Activated CD4-positive, alpha-beta T cell treated with anti-CD3 and anti-CD28 coated beads for 36 hours (primary cell): ENCODE measurements at regions of chr12 and their contacts with region 1.

Region 1: GRCh38 chr12:751192-751998 is 984 bp upstream of the WNK1 start:
- DNase-seq: peak; percentile 93
- ATAC-seq: peak; percentile 50
- H3K4me3 Mint-ChIP-seq: no peak overlapping the region
- H3K27ac Mint-ChIP-seq: no peak overlapping the region
- H3K4me1 Mint-ChIP-seq: peaks cover 17% of the 10 kb centered on the region
- H3K27me3 Mint-ChIP-seq: no peaks in the 10 kb centered on the region

Region 2: GRCh38 chr12:569803-570434 is 181.5 kb before region 1 on chr12:
- CTCF ChIA-PET with region 1: interaction called, 64 read pairs
- POLR2A ChIA-PET with region 1: interaction called, 8 read pairs
- intact Hi-C with region 1: loop called (anchors 1 to 2 kb)
- DNase-seq: peak; percentile 94
- ATAC-seq: peak; percentile 89
- H3K4me3 Mint-ChIP-seq: peak overlapping the region; percentile 74
- H3K27ac Mint-ChIP-seq: peak overlapping the region; percentile 85
- H3K4me1 Mint-ChIP-seq: peaks cover 65% of the 10 kb centered on the region
- H3K27me3 Mint-ChIP-seq: no peaks in the 10 kb centered on the region

Region 3: DNA sequence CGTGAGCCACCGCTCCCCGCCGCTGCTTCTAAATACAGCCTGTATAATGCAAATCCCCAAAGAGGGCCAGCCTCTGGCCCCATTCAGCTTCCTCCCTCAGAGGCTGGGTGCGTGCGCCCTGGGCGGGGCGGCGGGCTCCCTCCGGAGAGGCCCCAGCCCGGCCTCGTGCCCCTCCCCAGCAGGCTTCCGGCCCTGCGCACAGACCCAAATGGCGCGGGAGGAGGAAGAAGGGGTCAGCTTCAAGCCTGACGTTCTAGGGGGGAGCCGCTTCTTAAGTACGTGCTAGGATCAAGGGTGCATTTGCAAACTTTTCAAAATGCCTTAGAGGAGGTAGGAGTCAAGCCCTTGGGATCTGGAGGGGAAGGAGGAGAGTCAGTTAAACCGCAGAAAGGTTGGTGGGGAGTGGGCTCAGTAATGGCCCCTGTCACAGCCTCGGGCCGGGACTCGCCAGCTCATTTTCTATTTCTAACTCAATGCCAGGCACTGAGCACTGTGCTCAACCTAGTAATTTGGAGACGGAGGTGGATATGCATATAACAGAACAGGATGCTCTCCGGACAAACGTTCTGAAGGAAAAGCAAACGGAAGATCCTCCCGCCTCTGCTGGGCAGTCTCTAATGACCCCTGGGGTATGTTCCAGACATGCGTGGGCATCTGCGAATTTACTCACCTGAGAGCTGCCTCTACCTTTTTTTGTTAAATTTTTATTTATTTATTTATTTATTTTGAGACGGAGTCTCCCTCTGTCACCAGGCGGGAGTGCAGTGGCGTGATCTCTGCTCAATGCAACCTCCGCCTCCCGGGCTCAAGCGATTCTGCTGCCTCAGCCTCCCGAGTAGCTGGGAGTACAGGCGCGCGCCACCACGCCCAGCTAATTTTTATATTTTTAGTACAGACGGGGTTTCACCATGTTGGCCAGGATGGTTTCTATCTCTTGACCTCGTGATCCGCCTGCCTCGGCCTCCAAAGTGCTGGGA is 120.5 kb before region 1 on chr12:
- CTCF ChIA-PET with region 1: interaction called, 13 read pairs
- POLR2A ChIA-PET with region 1: interaction called, 6 read pairs
- intact Hi-C with region 1: loop called (anchors 1 kb)
- DNase-seq: peak; percentile 91
- ATAC-seq: peak; percentile 98
- H3K4me3 Mint-ChIP-seq: peak overlapping the region; percentile 88
- H3K27ac Mint-ChIP-seq: peak overlapping the region; percentile 100
- H3K4me1 Mint-ChIP-seq: peaks cover 47% of the 10 kb centered on the region
- H3K27me3 Mint-ChIP-seq: no peaks in the 10 kb centered on the region

Region 4: DNA sequence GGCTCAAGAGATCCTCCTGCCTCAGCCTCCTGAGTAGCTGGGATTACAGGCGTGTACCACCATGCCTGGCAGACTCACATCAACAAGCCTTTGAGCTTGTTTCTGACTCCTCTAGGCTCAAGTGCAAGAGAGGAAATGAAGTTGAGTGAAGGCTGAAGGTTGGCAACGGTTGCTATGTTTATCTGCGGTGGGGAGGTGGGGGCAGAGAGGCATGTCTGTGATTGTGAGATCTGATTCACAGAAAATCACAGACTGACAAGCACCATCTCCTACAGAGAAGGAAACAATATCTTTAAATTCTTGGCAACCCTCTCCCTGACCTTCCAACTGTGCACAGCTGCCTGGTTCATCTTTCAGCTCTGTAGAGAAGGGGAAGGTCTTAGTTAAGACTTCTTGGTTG is 66.0 kb before region 1 on chr12:
- CTCF ChIA-PET with region 1: interaction called, 8 read pairs
- POLR2A ChIA-PET with region 1: interaction called, 8 read pairs
- intact Hi-C with region 1: loop called in 1 of 2 experiments (anchors 1 kb)
- DNase-seq: peak; percentile 89
- ATAC-seq: peak; percentile 96
- H3K4me3 Mint-ChIP-seq: no peak overlapping the region
- H3K27ac Mint-ChIP-seq: peak overlapping the region; percentile 75
- H3K4me1 Mint-ChIP-seq: peaks cover 44% of the 10 kb centered on the region
- H3K27me3 Mint-ChIP-seq: no peaks in the 10 kb centered on the region

Region 5: GRCh38 chr12:779745-780734 is 28.6 kb after region 1 on chr12:
- CTCF ChIA-PET with region 1: interaction called, 14 read pairs
- POLR2A ChIA-PET with region 1: no interaction called
- intact Hi-C with region 1: loop called in 1 of 2 experiments (anchors 2 kb)
- DNase-seq: no peak
- ATAC-seq: peak; percentile 62
- H3K4me3 Mint-ChIP-seq: peak overlapping the region; percentile 64
- H3K27ac Mint-ChIP-seq: peak overlapping the region; percentile 75
- H3K4me1 Mint-ChIP-seq: peaks cover 70% of the 10 kb centered on the region
- H3K27me3 Mint-ChIP-seq: no peaks in the 10 kb centered on the region

Region 6: GRCh38 chr12:990661-991349 is 239.4 kb after region 1 on chr12 and contains the start of gene ERC1:
- CTCF ChIA-PET with region 1: no interaction called
- POLR2A ChIA-PET with region 1: no interaction called
- intact Hi-C with region 1: loop called in 1 of 2 experiments (anchors 2 kb)
- DNase-seq: peak; percentile 92
- ATAC-seq: peak; percentile 88
- H3K4me3 Mint-ChIP-seq: peak within 1 kb of the TSS; percentile 92
- H3K27ac Mint-ChIP-seq: peak within 1 kb of the TSS; percentile 95
- H3K4me1 Mint-ChIP-seq: peaks cover 44% of the 10 kb centered on the region
- H3K27me3 Mint-ChIP-seq: no peaks in the 10 kb centered on the region
- total RNA-seq, gene ERC1: 24.7 to 31.9 TPM